ENCODE measurements at regions of chr16 and their contacts with region 1.

Region 1: DNA sequence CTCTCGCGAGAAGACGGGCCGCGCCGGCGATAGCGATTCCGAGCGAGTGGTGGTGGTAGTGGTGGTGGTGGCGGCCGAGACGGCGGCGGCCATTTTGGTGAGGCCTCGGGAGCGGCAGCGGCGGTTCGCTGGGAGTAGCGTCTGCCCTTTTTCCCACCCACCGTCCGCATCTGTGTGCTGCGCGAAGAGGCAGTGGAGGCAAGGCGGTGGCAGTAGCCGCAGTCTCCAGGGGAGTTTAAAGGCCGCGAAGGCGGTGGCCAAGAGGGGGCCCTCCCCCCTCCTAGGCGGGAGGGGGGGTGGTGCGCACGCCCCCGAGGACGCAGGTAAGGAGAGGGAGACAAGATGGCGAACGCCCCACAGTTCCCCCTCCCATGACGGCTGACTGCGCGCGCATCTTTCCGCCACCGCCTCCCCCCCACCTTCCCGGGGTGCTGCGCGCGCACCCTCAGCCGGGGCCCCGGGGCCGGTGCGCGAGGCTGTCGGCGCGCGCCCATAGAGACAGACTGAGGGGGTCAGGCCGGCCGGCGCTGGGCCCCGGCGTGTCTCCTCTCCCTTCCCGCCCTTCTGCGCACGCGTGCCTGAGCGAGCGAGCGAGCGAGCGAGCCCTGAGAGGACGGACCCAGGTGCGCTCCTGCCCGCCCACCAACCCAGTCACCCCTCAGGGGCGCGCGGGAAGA is 694 bp upstream of the SRCAP start:
- DNase-seq: peak; percentile 99
- H3K4me3 Mint-ChIP-seq: peak overlapping the region; percentile 99
- H3K27ac Mint-ChIP-seq: peak overlapping the region; percentile 99
- H3K4me1 Mint-ChIP-seq: peaks cover 42% of the 10 kb centered on the region
- H3K27me3 Mint-ChIP-seq: peaks cover 2% of the 10 kb centered on the region

Region 2: GRCh38 chr16:30429678-30430427 is 268.4 kb before region 1 on chr16 and contains the start of gene DCTPP1:
- intact Hi-C with region 1: loop called (anchors 1 kb)
- DNase-seq: peak; percentile 96
- H3K4me3 Mint-ChIP-seq: no peak within 1 kb of the TSS
- H3K27ac Mint-ChIP-seq: no peak within 1 kb of the TSS
- H3K4me1 Mint-ChIP-seq: peaks cover 31% of the 10 kb centered on the region
- H3K27me3 Mint-ChIP-seq: no peaks in the 10 kb centered on the region
- total RNA-seq, gene DCTPP1: 173 and 178 TPM in 2 replicates

Region 3: DNA sequence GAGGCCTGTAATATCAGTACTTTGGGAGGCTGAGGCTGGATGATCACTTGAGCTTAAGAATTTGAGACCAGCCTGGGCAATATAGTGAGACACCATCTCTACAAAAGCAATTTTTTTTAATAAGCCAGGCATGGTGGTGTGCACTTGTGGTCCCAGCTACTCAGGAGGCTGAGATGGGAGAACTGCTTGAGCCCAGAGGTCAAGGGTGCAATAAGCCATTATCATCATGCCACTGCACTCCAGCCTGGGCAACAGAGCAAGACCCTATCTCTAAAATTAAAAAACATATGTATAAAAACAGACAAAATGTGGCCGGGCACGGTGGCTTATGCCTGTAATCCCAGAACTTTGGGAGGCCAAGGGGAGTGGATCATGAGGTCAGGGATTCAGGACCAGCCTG is 109.6 kb before region 1 on chr16:
- intact Hi-C with region 1: no loop called
- DNase-seq: no peak
- H3K4me3 Mint-ChIP-seq: no peak overlapping the region
- H3K27ac Mint-ChIP-seq: no peak overlapping the region
- H3K4me1 Mint-ChIP-seq: peaks cover 18% of the 10 kb centered on the region
- H3K27me3 Mint-ChIP-seq: no peaks in the 10 kb centered on the region

Region 4: GRCh38 chr16:30609926-30610839 is 88.1 kb before region 1 on chr16 and contains the start of gene ZNF689:
- intact Hi-C with region 1: loop called (anchors 1 kb)
- DNase-seq: peak; percentile 95
- H3K4me3 Mint-ChIP-seq: peak within 1 kb of the TSS; percentile 93
- H3K27ac Mint-ChIP-seq: peak within 1 kb of the TSS; percentile 96
- H3K4me1 Mint-ChIP-seq: peaks cover 19% of the 10 kb centered on the region
- H3K27me3 Mint-ChIP-seq: no peaks in the 10 kb centered on the region
- total RNA-seq, gene ZNF689: 14.7 TPM in 2 replicates

Region 5: GRCh38 chr16:30715737-30716445 is 17.6 kb after region 1 on chr16:
- intact Hi-C with region 1: loop called (anchors 1 kb)
- DNase-seq: peak; percentile 28
- H3K4me3 Mint-ChIP-seq: peak overlapping the region; percentile 65
- H3K27ac Mint-ChIP-seq: peak overlapping the region; percentile 94
- H3K4me1 Mint-ChIP-seq: peaks cover 50% of the 10 kb centered on the region
- H3K27me3 Mint-ChIP-seq: no peaks in the 10 kb centered on the region

Region 6: DNA sequence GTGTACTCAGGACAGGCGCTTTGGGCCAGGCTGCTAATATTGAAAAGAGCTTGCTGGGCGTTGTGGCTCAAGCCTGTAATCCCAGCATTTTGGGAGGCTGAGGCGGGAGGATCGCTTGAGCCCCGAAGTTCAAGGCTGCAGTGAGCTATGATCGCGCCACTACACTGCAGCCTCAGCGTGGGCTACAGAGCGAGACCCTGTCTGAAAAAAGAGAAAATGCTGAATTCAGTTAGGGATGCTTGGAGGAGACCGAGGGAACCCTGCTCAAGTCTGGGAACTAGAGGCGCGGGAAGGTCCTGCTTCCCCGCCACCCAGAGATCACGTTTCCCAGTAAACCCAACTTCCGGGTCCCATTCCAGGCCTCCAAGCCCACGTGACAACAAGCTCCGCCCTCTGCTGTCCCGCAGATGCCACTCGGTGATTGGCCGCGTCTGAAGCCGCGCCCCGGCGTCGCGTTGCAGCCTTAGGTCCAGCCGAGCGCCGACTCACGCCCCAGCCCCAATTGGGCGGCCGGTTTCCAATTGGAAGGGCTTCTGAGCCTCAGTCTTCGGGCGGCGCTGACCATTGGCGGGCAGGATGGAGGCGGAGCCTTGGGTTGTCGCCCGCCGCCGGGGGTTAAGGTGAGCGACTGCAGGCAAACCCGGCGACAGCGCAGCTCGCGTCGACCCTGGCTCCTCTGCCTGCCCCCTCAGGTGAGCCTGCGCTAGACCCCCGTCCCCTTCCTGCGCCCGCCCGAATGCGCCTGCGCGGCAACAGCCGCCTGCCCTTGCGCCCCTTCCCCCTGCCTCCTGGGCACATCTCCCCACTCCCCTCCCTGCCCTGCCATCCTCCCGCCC is 49.7 kb after region 1 on chr16 and contains the start of gene PHKG2:
- intact Hi-C with region 1: no loop called
- DNase-seq: peak; percentile 97
- H3K4me3 Mint-ChIP-seq: peak within 1 kb of the TSS; percentile 93
- H3K27ac Mint-ChIP-seq: peak within 1 kb of the TSS; percentile 83
- H3K4me1 Mint-ChIP-seq: peaks cover 19% of the 10 kb centered on the region
- H3K27me3 Mint-ChIP-seq: no peaks in the 10 kb centered on the region
- total RNA-seq, gene PHKG2: 42.4 and 43.6 TPM in 2 replicates

Region 7: GRCh38 chr16:30786936-30787612 is 88.8 kb after region 1 on chr16 and contains the start of gene ZNF629:
- intact Hi-C with region 1: no loop called
- DNase-seq: no peak
- H3K4me3 Mint-ChIP-seq: peak within 1 kb of the TSS; percentile 78
- H3K27ac Mint-ChIP-seq: no peak within 1 kb of the TSS
- H3K4me1 Mint-ChIP-seq: no peaks in the 10 kb centered on the region
- H3K27me3 Mint-ChIP-seq: peaks cover 36% of the 10 kb centered on the region
- total RNA-seq, gene ZNF629: 2.7 and 3.2 TPM in 2 replicates

Region 8: GRCh38 chr16:30874821-30875717 is 176.8 kb after region 1 on chr16:
- intact Hi-C with region 1: loop called (anchors 1 kb)
- DNase-seq: peak; percentile 86
- H3K4me3 Mint-ChIP-seq: peak overlapping the region; percentile 97
- H3K27ac Mint-ChIP-seq: peak overlapping the region; percentile 94
- H3K4me1 Mint-ChIP-seq: peaks cover 23% of the 10 kb centered on the region
- H3K27me3 Mint-ChIP-seq: no peaks in the 10 kb centered on the region

Measured in activated T-helper 1 cell treated with anti-CD3 and anti-CD28 coated beads, Interleukin-12 subunit alpha, Interleukin-12 subunit beta, Interleukin-2, Interleukin-4 antibody, amounts not matched to agents 30 ng/mL and 10 ng/mL and 1 ng/mL, durations not matched to agents 14 hours and 24 hours and 36 hours (primary cell).